Right ventricle myocardium superior (tissue), 1 donor: ENCODE measurements at regions of chr10 and their contacts with region 1.

Region 1: DNA sequence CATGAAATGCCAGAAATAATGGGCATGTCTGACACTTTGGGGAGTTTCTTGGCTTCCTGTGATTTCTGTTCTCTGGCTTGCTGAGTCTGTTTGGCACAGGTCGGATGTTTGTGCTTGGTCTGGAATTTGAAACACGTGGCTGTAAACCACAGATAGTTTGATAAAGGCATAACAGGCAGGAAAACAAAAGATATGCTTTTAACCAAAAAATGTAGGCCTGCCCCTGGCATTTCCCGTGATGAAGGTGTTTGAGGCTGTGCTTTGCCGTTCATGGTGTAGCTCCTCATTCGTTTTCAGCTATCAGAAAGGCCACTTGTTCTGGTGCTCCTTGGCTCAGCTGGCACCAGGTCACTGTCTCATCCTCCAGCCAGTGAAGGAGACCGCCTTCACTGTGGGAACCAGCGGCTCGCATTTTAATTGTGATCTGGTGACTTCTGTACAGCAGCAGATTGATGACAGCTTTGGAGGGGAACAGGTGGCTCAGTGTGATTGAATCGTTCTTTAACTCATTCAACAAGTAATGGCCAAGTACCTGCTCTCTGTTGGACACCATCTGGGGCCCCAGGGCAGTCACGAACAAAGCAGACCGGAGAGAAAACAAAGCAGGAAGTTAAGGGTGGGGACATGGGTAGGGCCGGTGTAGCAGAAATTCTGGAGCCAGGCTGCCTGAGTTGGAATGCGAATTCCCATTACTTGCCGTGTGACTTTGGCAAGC is 111.5 kb downstream of the CCNY start:
- DNase-seq: no peak
- ATAC-seq: peak; percentile 28

Region 2: DNA sequence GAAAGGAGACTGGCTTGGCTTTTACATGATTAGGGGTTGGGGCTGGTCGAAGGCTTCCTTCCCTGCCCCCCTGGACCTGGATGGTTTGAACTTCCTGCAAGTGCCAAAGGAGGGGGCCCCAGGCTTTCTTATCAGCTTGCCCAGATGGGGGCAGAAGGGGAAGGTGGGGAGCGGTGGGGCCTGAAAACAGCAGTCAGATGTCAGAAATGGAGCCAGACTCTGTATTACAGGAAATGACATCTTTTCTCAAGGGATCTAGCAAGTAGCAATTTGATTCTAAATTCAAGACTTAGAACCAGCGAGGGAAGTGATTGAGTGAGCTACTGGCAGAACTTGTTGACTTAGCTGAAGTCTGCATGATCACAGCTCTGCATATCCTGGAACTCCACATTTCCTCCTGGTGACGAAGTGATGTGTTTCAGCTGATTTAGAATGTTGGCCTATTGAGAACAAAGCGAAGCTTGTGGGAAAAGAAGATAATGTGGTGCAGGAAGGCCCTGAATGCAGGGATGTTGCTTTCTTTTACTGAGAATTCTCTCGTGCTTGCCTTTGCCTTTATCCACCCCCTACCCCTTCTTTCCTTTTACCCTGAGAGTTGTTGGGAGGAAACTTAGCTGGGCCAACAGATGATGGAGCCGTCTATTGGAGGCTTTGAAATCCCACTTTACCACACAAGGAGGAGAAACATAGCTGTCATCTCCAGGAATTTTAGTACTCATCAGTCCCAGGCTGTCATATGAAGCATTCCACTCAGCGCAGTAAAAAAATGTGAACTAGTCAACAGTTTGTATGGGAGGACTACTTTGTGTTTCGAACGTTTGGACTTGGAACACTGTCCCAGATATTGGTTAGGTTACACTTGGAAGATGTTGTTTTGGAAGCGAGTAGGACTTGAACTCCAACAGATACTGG is 68.4 kb before region 1 on chr10:
- intact Hi-C with region 1: loop called (anchors 10 kb)
- DNase-seq: peak; percentile 54
- ATAC-seq: peak; percentile 73